MCF 10A (cell line): ENCODE measurements at regions of chr18 and their contacts with region 1.

Region 1: DNA sequence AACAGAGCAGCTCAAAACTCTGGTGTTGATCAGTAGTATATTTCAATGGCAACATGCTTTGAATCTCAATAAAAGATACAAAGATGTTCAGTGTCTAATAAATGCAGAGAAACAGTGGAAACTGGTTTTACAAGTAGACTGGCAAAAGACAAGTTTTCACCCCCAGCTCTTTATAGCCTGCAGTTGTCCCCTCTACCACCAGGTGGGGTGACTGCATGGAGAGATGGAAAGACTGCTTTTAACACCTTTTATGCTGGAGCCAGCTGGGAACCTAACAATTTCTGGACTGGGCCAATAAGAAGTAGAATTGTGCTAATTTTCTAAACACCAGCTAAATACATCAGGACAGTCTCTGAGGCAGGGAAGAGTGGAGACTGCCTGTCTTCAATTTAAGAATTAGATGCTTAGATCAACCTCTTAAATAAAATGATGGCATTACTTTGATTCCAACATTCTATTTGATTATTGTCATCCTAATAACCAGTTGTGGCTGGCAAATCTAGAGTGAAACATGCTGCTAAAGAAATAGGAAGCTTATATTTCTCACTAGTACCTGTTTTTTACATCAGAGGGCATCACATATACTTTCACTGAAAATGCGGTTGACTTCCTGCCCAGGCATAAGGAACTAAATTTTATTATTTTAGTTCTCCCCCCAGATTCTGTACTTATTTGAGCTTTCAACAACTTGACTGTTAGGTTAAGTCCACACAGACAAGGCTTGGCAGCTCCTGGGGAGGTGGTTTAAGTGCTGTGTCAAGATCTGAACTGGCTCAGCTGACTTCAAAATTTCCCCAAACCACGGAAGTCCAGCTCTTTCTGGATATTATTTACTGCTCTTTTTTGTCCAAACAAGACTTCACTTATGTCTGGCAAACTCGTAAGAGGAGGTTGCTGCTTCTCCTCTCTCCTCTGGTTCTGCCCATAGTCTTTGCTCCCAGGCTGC is 140.5 kb downstream of the TPGS2 start:
- DNase-seq: peak; percentile 75
- H3K4me3 Mint-ChIP-seq: no peak overlapping the region
- H3K27ac Mint-ChIP-seq: no peak overlapping the region
- H3K4me1 Mint-ChIP-seq: no peaks in the 10 kb centered on the region
- H3K27me3 Mint-ChIP-seq: no peaks in the 10 kb centered on the region
- CTCF ChIP-seq: peak; percentile 85

Region 2: GRCh38 chr18:36095936-36096519 is 592.3 kb before region 1 on chr18:
- CTCF ChIA-PET with region 1: interaction called, 3 read pairs
- POLR2A ChIA-PET with region 1: no interaction called
- intact Hi-C with region 1: loop called (anchors 10 kb)
- DNase-seq: peak; percentile 64
- H3K4me3 Mint-ChIP-seq: no peak overlapping the region
- H3K27ac Mint-ChIP-seq: no peak overlapping the region
- H3K4me1 Mint-ChIP-seq: no peaks in the 10 kb centered on the region
- H3K27me3 Mint-ChIP-seq: no peaks in the 10 kb centered on the region
- CTCF ChIP-seq: peak; percentile 59

Region 3: GRCh38 chr18:36446059-36446458 is 242.2 kb before region 1 on chr18:
- CTCF ChIA-PET with region 1: no interaction called
- POLR2A ChIA-PET with region 1: no interaction called
- intact Hi-C with region 1: no loop called
- DNase-seq: peak; percentile 19
- H3K4me3 Mint-ChIP-seq: no peak overlapping the region
- H3K27ac Mint-ChIP-seq: no peak overlapping the region
- H3K4me1 Mint-ChIP-seq: peaks cover 20% of the 10 kb centered on the region
- H3K27me3 Mint-ChIP-seq: no peaks in the 10 kb centered on the region
- CTCF ChIP-seq: no peak

Region 4: GRCh38 chr18:36532394-36532793 is 155.9 kb before region 1 on chr18:
- CTCF ChIA-PET with region 1: no interaction called
- POLR2A ChIA-PET with region 1: no interaction called
- intact Hi-C with region 1: no loop called
- DNase-seq: peak; percentile 71
- H3K4me3 Mint-ChIP-seq: no peak overlapping the region
- H3K27ac Mint-ChIP-seq: peak overlapping the region; percentile 6
- H3K4me1 Mint-ChIP-seq: peaks cover 12% of the 10 kb centered on the region
- H3K27me3 Mint-ChIP-seq: no peaks in the 10 kb centered on the region
- CTCF ChIP-seq: no peak

Region 5: DNA sequence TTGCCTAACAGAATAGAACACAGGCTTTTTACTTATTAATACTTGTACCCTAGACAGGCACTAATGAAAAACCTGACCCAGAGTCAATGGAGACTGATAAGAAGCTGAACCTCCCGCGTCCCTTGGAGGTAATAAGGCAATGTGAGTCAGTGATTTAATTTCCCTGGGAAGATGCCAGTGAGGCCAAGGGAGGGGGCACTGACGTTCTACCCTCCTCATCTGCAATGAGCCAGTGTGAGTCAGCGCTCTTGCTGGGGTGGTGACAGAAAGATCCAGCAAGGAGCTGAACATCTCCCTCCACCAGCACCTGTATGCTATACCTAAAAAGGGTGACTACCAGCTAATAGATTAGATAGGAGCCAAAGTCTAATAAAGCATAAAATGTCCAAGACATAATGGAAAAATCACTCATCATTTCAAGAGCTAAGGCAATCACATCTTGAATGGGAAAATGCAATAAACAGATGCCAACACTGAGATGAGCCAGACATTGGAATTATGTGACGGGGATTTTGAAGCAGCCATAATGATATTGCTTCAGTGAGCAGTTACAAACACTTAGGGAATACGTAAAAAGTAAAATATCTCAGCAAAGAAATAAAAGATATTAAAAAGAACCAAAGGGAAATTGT is 23.6 kb after region 1 on chr18:
- CTCF ChIA-PET with region 1: interaction called, 29 read pairs
- POLR2A ChIA-PET with region 1: interaction called, 3 read pairs
- intact Hi-C with region 1: no loop called
- DNase-seq: peak; percentile 89
- H3K4me3 Mint-ChIP-seq: no peak overlapping the region
- H3K27ac Mint-ChIP-seq: no peak overlapping the region
- H3K4me1 Mint-ChIP-seq: peaks cover 8% of the 10 kb centered on the region
- H3K27me3 Mint-ChIP-seq: no peaks in the 10 kb centered on the region
- CTCF ChIP-seq: no peak

Region 6: DNA sequence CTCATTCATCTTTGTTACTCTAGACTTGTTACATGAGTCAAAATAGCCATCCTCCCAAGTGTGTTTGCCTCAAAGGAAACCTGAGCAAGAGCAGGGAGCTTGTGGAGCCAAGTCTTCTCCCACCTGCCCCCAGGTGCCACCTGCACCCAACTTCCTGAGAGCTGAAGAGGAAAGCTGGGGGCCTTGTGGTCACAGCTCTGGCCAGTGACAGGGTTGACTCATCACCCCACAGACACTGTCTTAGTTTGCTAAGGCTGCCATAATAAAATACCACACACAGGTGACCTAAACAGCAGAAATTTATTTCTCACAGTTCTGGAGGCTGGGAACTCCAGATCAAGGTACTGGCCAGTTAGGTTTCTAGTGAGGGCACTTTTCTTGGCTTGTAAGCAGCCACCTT is 40.9 kb after region 1 on chr18:
- CTCF ChIA-PET with region 1: interaction called, 17 read pairs
- POLR2A ChIA-PET with region 1: no interaction called
- intact Hi-C with region 1: no loop called
- DNase-seq: no peak
- H3K4me3 Mint-ChIP-seq: no peak overlapping the region
- H3K27ac Mint-ChIP-seq: no peak overlapping the region
- H3K4me1 Mint-ChIP-seq: no peaks in the 10 kb centered on the region
- H3K27me3 Mint-ChIP-seq: no peaks in the 10 kb centered on the region
- CTCF ChIP-seq: no peak

Region 7: DNA sequence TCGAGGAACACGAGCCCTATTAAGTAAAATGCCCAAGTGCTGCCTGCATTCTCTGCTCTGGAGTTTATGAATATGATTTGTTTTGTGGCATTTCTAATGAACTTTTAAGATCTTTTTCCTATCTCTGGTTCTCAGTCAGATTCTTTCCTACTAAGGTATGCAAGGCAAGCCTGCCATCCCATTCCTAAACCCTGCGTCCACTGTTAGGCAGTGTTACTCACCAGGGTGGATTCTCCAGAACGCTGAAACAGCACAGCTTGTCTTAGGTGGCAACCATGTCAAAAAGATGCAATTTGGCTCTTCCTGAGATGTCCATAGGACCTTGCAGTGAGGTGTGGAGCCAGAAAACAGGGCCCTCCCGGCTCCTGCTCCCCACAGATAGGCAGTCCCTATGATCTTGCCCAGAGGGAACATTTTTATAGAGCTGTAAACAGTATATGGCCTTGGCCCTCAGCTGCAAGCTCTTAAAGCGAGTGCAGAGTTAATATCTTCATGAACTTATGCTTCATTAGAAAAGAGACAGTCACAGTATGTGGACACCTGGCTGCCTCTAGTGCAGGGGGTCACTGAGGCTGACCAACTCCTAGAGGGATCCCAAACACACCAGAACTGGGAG is 56.1 kb after region 1 on chr18:
- CTCF ChIA-PET with region 1: interaction called, 26 read pairs
- POLR2A ChIA-PET with region 1: no interaction called
- intact Hi-C with region 1: no loop called
- DNase-seq: no peak
- H3K4me3 Mint-ChIP-seq: no peak overlapping the region
- H3K27ac Mint-ChIP-seq: peak overlapping the region; percentile 47
- H3K4me1 Mint-ChIP-seq: peaks cover 10% of the 10 kb centered on the region
- H3K27me3 Mint-ChIP-seq: no peaks in the 10 kb centered on the region
- CTCF ChIP-seq: no peak

Region 8: DNA sequence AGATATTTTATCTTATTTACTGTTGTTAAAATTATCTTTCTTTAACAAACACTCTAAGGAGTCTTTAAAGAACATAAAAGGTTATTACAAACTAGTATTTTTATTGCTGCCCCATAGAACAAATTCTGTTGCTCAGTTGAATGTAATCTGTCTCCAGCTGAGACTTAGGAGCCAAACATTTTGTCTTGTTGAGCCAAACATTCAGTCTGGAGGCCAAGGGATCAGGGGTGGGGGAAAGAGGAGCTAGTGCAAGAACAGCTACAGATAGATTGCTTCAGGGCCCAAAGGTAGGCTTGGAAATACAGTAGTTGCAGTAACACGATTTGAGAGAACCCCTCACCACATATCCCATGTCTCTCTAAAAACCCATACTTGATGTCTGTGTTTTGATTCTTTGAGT is 89.3 kb after region 1 on chr18:
- CTCF ChIA-PET with region 1: interaction called, 10 read pairs
- POLR2A ChIA-PET with region 1: no interaction called
- intact Hi-C with region 1: no loop called
- DNase-seq: no peak
- H3K4me3 Mint-ChIP-seq: no peak overlapping the region
- H3K27ac Mint-ChIP-seq: no peak overlapping the region
- H3K4me1 Mint-ChIP-seq: no peaks in the 10 kb centered on the region
- H3K27me3 Mint-ChIP-seq: no peaks in the 10 kb centered on the region
- CTCF ChIP-seq: no peak

Region 9: DNA sequence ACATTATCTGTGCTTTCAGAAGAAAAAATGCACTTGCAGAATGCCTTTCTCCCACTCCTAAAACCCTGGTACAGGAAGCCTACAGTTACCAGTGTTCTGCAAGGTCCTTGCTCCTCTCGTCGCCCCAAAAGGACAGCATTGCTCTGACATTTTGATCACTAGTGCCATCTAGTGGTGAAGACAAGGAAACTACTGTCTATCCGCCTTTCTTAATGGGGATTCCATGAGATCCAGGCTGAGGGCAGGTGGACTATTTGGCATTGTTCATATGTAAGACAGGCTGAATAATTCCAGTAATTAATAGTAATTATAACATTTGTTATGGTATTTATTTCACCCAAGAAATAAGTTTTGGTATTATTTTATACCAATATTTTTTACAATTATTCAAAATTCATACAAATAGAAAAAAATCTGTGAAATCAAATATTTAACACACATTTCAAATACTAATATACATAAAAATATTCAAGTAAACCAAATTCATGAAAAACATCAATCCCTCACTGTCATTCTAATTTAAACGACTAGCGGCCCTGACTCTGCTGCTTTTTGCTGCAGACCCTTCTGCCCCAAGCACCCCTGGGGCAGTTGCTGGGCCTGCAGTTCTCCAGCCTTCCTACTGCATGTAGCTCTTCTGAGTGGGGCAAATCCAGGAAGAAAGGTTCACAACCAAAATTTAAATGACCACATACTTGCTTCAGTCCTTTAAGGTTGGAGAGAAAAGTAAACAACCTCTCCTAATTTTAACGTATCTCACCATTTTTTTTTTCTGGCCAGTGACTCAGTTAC is 121.5 kb after region 1 on chr18:
- CTCF ChIA-PET with region 1: interaction called, 23 read pairs
- POLR2A ChIA-PET with region 1: no interaction called
- intact Hi-C with region 1: loop called (anchors 1 kb)
- DNase-seq: peak; percentile 73
- H3K4me3 Mint-ChIP-seq: no peak overlapping the region
- H3K27ac Mint-ChIP-seq: no peak overlapping the region
- H3K4me1 Mint-ChIP-seq: no peaks in the 10 kb centered on the region
- H3K27me3 Mint-ChIP-seq: no peaks in the 10 kb centered on the region
- CTCF ChIP-seq: peak; percentile 74